CD8-positive, alpha-beta T cell (primary cell): ENCODE measurements at regions of chr5 and their contacts with region 1.

Region 1: GRCh38 chr5:152532714-152533113 is 127.6 kb upstream of the NMUR2 start:
- DNase-seq: peak in 2 of 9 experiments; percentile 42 to 50
- ATAC-seq: no peak
- H3K4me3 ChIP-seq: no peak overlapping the region
- H3K4me3 Mint-ChIP-seq: no peak overlapping the region
- H3K27ac ChIP-seq: no peak overlapping the region
- H3K27ac Mint-ChIP-seq: no peak overlapping the region
- H3K4me1 ChIP-seq: peaks cover 4% of the 10 kb centered on the region
- H3K4me1 Mint-ChIP-seq: peaks cover 4% of the 10 kb centered on the region
- H3K27me3 ChIP-seq: no peaks in the 10 kb centered on the region
- H3K27me3 Mint-ChIP-seq: no peaks in the 10 kb centered on the region
- CTCF ChIP-seq: no peak

Region 2: GRCh38 chr5:153094333-153094732 is 561.6 kb after region 1 on chr5:
- CTCF ChIA-PET with region 1: no interaction called
- POLR2A ChIA-PET with region 1: no interaction called
- intact Hi-C with region 1: loop called in 1 of 2 experiments (anchors 5 kb)
- DNase-seq: no peak
- ATAC-seq: no peak
- H3K4me3 ChIP-seq: no peak overlapping the region
- H3K4me3 Mint-ChIP-seq: no peak overlapping the region
- H3K27ac ChIP-seq: no peak overlapping the region
- H3K27ac Mint-ChIP-seq: no peak overlapping the region
- H3K4me1 ChIP-seq: no peaks in the 10 kb centered on the region
- H3K4me1 Mint-ChIP-seq: no peaks in the 10 kb centered on the region
- H3K27me3 ChIP-seq: no peaks in the 10 kb centered on the region
- H3K27me3 Mint-ChIP-seq: no peaks in the 10 kb centered on the region
- CTCF ChIP-seq: no peak